MCF 10A (cell line): ENCODE measurements at regions of chr11 and their contacts with region 1.

Region 1: DNA sequence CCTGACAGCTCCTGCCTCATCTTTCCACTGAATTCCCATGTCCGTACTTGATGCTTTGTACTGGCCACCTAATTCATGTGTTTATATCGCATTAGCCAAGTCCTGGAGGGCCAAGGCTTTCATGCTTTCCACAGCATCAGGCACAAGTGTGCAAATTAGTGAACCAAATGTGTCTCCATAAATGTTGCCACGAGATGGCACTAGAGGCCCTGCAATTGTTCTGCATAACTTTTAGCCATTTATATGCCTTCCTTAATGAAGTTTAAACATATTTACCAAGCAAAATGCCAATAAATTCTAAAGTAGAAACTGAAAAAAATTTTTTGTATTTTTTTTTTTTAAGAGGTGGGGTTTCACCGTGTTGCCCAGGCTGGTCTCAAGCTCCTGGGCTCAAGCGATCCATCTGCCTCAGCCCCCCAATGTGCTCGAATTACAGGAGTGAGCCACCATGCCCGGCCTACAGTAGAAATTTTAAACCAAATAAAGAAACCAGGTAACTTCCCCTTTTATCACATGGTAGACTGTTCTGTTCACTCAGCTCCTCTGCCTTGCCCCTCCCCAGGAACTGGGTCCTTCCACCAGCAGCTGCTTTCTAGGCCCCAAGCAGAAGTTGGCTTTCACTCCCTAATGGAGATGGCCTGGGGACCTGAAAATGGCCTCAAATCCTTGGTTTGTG is 20.8 kb upstream of the IL18BP start:
- DNase-seq: peak; percentile 66
- H3K4me3 Mint-ChIP-seq: no peak overlapping the region
- H3K27ac Mint-ChIP-seq: no peak overlapping the region
- H3K4me1 Mint-ChIP-seq: no peaks in the 10 kb centered on the region
- H3K27me3 Mint-ChIP-seq: no peaks in the 10 kb centered on the region
- CTCF ChIP-seq: peak; percentile 67

Region 2: DNA sequence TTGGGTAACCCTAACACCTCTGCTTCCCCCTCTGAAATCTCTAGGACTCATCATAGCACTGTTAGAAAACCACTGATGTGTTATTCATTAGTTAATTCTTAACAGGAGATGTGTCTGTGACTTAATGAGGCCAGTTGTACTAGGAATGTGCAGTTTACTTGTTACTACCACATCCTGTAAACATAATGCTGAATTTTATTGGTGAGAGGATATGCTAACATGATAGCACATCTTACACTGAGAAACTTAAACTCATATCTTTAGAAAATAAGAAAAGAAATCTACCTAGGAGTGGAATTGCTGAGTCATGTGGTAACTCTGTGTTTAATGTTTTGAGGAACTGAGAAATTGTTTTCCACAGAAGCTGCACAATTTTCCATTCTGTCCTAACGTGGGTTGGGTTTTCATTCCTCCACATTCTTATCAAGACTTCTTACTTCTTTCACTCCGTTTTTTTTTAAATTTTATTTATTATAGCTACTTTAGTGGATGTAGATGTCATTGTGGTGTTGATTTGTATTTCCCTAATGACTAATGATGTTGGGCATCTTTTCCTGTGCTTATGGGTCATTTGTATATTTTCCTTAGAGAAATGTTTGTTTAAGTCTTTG is 15.3 kb before region 1 on chr11:
- CTCF ChIA-PET with region 1: interaction called, 35 read pairs
- POLR2A ChIA-PET with region 1: interaction called, 3 read pairs
- intact Hi-C with region 1: no loop called
- DNase-seq: no peak
- H3K4me3 Mint-ChIP-seq: no peak overlapping the region
- H3K27ac Mint-ChIP-seq: no peak overlapping the region
- H3K4me1 Mint-ChIP-seq: no peaks in the 10 kb centered on the region
- H3K27me3 Mint-ChIP-seq: no peaks in the 10 kb centered on the region
- CTCF ChIP-seq: no peak

Region 3: DNA sequence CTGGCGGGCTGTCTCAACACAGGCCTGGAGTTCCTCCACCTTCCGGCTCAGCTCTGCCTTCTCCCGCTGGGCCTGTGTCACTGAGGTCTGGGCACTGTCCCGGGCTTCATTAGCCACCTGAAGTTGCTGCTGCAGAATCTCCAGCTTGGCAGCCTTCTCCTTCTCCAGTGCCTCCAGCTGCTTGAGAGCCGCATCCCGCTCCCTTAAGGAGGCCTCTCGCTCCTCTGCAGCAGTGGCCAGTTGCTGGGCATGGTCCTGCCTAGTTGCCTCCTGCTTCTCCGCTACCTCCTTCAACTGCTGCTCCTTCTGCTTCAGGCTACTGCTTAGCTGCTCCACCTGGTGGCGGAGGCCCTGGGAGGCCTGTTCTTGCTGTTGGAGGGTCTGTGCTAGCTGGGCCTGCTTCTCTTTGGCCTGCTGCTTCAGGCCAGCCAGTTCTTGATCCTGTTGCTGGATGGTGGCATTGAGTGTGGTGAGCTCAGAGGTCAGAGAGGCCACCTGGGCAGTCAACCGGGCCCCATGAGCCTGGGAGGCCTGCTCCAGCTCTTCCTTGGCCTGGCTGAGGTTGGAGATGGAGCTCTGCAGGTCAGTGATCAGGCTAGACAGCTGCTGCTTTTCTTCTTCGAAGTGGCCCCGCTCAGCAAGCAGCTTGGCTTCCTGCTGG is 37.8 kb after region 1 on chr11:
- CTCF ChIA-PET with region 1: interaction called, 33 read pairs
- POLR2A ChIA-PET with region 1: interaction called, 4 read pairs
- intact Hi-C with region 1: no loop called
- DNase-seq: no peak
- H3K4me3 Mint-ChIP-seq: no peak overlapping the region
- H3K27ac Mint-ChIP-seq: no peak overlapping the region
- H3K4me1 Mint-ChIP-seq: peaks cover 34% of the 10 kb centered on the region
- H3K27me3 Mint-ChIP-seq: no peaks in the 10 kb centered on the region
- CTCF ChIP-seq: peak; percentile 20

Region 4: GRCh38 chr11:72091005-72091691 is 113.3 kb after region 1 on chr11:
- CTCF ChIA-PET with region 1: interaction called, 19 read pairs
- POLR2A ChIA-PET with region 1: no interaction called
- intact Hi-C with region 1: no loop called
- DNase-seq: peak; percentile 69
- H3K4me3 Mint-ChIP-seq: no peak overlapping the region
- H3K27ac Mint-ChIP-seq: peak overlapping the region; percentile 70
- H3K4me1 Mint-ChIP-seq: no peaks in the 10 kb centered on the region
- H3K27me3 Mint-ChIP-seq: no peaks in the 10 kb centered on the region
- CTCF ChIP-seq: peak; percentile 77

Region 5: DNA sequence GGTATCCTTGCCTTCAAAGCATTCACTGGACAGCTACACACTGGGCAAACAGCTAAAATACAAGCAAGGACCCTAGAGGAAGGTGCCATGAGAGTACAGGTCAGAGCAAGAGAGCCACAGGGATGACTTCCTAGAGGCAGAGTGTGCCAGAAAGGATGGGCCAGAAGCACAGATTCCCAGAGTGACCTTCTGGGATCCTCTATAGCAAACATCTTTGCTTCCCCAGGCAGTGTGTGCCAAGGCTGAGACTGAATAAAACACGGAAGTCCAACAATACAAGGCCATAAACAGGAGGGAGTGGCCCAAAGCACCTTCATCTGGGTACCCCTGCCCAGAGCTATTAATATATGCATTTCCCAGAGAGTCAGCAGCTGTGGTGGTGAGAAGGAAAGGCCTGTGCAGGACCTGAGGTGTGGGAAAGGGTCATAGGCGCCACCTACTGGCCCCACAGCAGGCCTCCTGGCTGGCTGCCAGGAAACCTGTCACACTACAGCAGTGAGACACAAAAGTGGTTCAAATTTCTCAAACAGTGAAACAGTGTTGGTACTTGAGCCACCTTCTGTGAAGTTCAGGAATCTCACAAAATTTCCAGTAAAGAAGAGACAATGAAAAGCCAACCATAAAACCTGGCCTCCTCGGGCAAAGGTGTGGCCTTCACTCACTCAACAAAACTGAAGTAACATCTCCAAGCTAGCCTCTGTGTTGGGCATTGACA is 436.2 kb after region 1 on chr11:
- CTCF ChIA-PET with region 1: interaction called, 20 read pairs
- POLR2A ChIA-PET with region 1: no interaction called
- intact Hi-C with region 1: loop called (anchors 10 kb)
- DNase-seq: peak; percentile 85
- H3K4me3 Mint-ChIP-seq: no peak overlapping the region
- H3K27ac Mint-ChIP-seq: no peak overlapping the region
- H3K4me1 Mint-ChIP-seq: peaks cover 5% of the 10 kb centered on the region
- H3K27me3 Mint-ChIP-seq: no peaks in the 10 kb centered on the region
- CTCF ChIP-seq: peak; percentile 82